Endothelial cell of umbilical vein (primary cell): ENCODE measurements at regions of chr9 and their contacts with region 1.

Region 1: DNA sequence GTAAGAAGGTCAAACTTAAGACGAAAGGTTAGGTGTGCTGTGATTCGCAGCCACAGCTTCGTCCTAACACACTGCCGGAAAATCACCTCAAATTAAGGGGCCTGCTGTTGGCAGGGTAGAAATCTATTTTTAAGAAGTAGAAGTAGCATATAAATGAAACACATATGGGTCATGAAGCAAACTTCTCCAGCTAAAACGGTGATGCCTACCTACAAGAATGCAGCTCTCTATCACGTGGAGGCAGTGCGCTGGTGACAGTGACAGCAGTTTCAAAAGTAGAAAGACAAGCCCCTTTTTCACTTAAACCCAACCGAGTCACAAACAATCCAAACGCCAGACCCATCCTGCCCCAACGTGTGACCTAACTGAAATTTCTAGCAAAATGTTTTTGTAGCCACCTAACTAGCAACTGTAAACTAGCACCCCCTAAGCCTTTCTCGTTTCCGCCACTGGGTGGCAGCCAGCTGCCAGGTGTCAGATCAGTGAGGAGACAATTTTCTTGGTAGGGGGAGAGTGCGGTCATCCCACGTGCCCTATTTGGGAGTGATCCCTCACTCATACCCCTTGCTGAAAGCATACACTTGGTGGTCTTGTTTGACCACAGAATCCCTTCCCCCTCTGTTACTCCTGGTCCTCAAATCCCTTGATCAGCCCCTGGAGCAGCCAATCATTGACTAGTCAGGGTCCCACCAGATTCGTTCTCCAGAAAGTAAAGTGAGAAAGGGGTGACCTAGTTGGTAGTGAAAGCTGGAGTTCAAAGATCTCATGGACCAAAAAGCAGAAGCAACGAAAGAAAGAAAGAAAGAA is 71.8 kb upstream of the MAMDC2 start:
- DNase-seq: peak; percentile 66
- H3K4me3 ChIP-seq: no peak overlapping the region
- H3K27ac ChIP-seq: no peak overlapping the region
- H3K4me1 ChIP-seq: peaks cover 19% of the 10 kb centered on the region
- H3K27me3 ChIP-seq: no peaks in the 10 kb centered on the region
- CTCF ChIP-seq: peak; percentile 86 to 87
- POLR2A ChIP-seq: no peak

Region 2: GRCh38 chr9:69898714-69899209 is 73.1 kb before region 1 on chr9:
- CTCF ChIA-PET with region 1: no interaction called
- POLR2A ChIA-PET with region 1: interaction called, 3 read pairs
- dilution Hi-C with region 1: no loop called
- intact Hi-C with region 1: loop called (anchors 1 kb)
- DNase-seq: peak; percentile 95
- H3K4me3 ChIP-seq: peak overlapping the region in 1 of 3 experiments; percentile 12
- H3K27ac ChIP-seq: peak overlapping the region; percentile 94
- H3K4me1 ChIP-seq: peaks cover 32% of the 10 kb centered on the region
- H3K27me3 ChIP-seq: no peaks in the 10 kb centered on the region
- CTCF ChIP-seq: no peak
- POLR2A ChIP-seq: peak; percentile 75

Region 3: DNA sequence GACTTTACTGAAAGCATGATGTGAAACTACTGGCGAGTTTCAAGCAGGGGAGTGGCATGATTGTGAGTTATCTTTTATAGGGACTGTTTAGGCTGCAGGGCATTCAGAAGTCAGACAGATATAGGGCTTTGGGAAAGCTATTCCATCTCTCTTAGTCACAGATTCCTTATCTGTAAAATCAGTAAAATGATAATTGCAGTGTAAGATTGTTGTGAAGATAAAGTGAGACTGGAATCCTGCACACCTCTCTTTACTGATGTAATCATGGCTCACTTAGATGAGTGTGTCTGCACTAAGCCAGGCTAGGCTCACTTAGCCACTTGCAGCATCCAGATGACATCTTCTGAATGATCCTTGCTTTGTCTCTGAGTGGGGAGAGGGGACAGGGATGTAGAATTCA is 10.0 kb before region 1 on chr9:
- CTCF ChIA-PET with region 1: interaction called, 12 read pairs
- POLR2A ChIA-PET with region 1: interaction called, 4 read pairs
- dilution Hi-C with region 1: no loop called
- intact Hi-C with region 1: no loop called
- DNase-seq: no peak
- H3K4me3 ChIP-seq: no peak overlapping the region
- H3K27ac ChIP-seq: no peak overlapping the region
- H3K4me1 ChIP-seq: no peaks in the 10 kb centered on the region
- H3K27me3 ChIP-seq: no peaks in the 10 kb centered on the region
- CTCF ChIP-seq: no peak
- POLR2A ChIP-seq: no peak

Region 4: GRCh38 chr9:70229579-70229978 is 257.7 kb after region 1 on chr9:
- CTCF ChIA-PET with region 1: interaction called, 22 read pairs
- POLR2A ChIA-PET with region 1: no interaction called
- dilution Hi-C with region 1: no loop called
- intact Hi-C with region 1: loop called (anchors 1 kb)
- DNase-seq: peak; percentile 19
- H3K4me3 ChIP-seq: no peak overlapping the region
- H3K27ac ChIP-seq: no peak overlapping the region
- H3K4me1 ChIP-seq: no peaks in the 10 kb centered on the region
- H3K27me3 ChIP-seq: no peaks in the 10 kb centered on the region
- CTCF ChIP-seq: peak in 1 of 2 donors; percentile 18
- POLR2A ChIP-seq: no peak

Region 5: GRCh38 chr9:70340572-70340971 is 368.7 kb after region 1 on chr9:
- CTCF ChIA-PET with region 1: interaction called, 3 read pairs
- POLR2A ChIA-PET with region 1: no interaction called
- dilution Hi-C with region 1: no loop called
- intact Hi-C with region 1: loop called (anchors 1 kb)
- DNase-seq: peak; percentile 40
- H3K4me3 ChIP-seq: no peak overlapping the region
- H3K27ac ChIP-seq: no peak overlapping the region
- H3K4me1 ChIP-seq: no peaks in the 10 kb centered on the region
- H3K27me3 ChIP-seq: no peaks in the 10 kb centered on the region
- CTCF ChIP-seq: peak in 1 of 2 donors; percentile 4
- POLR2A ChIP-seq: no peak